ENCODE measurements at regions of chr17 and their contacts with region 1.

Region 1: DNA sequence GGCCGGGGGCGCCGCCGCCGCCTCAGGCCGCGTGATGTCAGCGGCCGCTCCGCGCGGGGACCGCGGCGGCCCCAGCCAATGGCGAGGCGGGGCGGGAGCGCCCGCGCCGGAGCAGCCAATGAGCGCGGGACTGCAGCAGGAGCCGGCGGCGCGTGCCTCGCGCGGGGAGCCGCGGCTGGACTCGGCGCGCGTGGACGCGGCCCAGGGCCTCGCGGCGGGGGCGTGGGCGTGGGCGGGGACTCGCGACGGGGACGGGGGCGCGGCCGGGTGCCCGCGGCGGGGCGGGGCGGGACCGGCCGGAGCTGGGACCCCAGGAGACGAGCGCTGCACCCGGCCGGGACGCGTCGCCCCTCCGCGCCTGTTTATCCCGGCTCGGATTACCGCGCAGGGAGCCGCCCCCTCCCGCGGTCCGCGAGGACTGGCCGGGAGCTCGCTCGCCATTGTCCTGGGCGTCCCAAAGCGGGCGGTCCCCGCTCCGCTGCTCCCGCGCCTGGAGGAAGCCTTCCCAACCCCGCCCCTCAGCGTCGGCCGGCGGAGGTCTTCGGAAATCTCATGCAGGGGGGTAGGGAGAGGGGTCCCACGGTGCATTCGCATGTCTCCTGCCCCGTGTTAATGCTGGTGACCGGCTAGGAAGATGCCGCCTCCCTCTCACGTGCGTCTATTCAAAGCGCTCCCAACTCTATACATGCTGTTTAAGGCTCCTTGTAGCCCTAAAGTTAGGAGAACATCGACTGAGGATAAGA is at the start of gene RNF157:
- DNase-seq: peak; percentile 39 to 90 (median 64)
- ATAC-seq: peak; percentile 91
- H3K4me3 ChIP-seq: peak within 1 kb of the TSS; percentile 86
- H3K4me3 Mint-ChIP-seq: peak within 1 kb of the TSS; percentile 89
- H3K27ac ChIP-seq: peak within 1 kb of the TSS; percentile 35 to 36
- H3K27ac Mint-ChIP-seq: peak within 1 kb of the TSS; percentile 77
- H3K4me1 ChIP-seq: peaks cover 66% of the 10 kb centered on the region
- H3K4me1 Mint-ChIP-seq: peaks cover 54% of the 10 kb centered on the region
- H3K27me3 ChIP-seq: no peaks in the 10 kb centered on the region
- H3K27me3 Mint-ChIP-seq: no peaks in the 10 kb centered on the region
- CTCF ChIP-seq: no peak
- total RNA-seq, gene RNF157: 18.5 to 21.1 TPM

Region 2: GRCh38 chr17:76252040-76252954 is 11.7 kb after region 1 on chr17:
- CTCF ChIA-PET with region 1: interaction called, 9 read pairs
- POLR2A ChIA-PET with region 1: interaction called, 27 read pairs
- intact Hi-C with region 1: no loop called
- DNase-seq: peak in 7 of 14 experiments; percentile 26 to 80 (median 63)
- ATAC-seq: peak; percentile 76
- H3K4me3 ChIP-seq: peak overlapping the region; percentile 6
- H3K4me3 Mint-ChIP-seq: peak overlapping the region; percentile 79
- H3K27ac ChIP-seq: peak overlapping the region; percentile 47 to 82
- H3K27ac Mint-ChIP-seq: peak overlapping the region; percentile 87
- H3K4me1 ChIP-seq: peaks cover 68% of the 10 kb centered on the region
- H3K4me1 Mint-ChIP-seq: peaks cover 61% of the 10 kb centered on the region
- H3K27me3 ChIP-seq: no peaks in the 10 kb centered on the region
- H3K27me3 Mint-ChIP-seq: no peaks in the 10 kb centered on the region
- CTCF ChIP-seq: no peak

Measured in CD4-positive, alpha-beta T cell (primary cell).